Heart right ventricle (tissue), 16 donors: ENCODE measurements at regions of chr4 and their contacts with region 1.

Region 1: GRCh38 chr4:100754751-100755150 is 236.9 kb upstream of the EMCN start:
- DNase-seq: no peak
- ATAC-seq: no peak
- H3K4me3 ChIP-seq: no peak overlapping the region
- H3K27ac ChIP-seq: no peak overlapping the region
- H3K4me1 ChIP-seq: no peaks in the 10 kb centered on the region
- H3K27me3 ChIP-seq: no peaks in the 10 kb centered on the region
- CTCF ChIP-seq: no peak

Region 2: GRCh38 chr4:100086592-100087435 is 667.9 kb before region 1 on chr4:
- intact Hi-C with region 1: loop called in 2 of 10 experiments (anchors 5 to 10 kb)
- DNase-seq: no peak
- ATAC-seq: peak in 5 of 8 donors; percentile 17 to 66 (median 41)
- H3K4me3 ChIP-seq: no peak overlapping the region
- H3K27ac ChIP-seq: peak overlapping the region in 2 of 10 donors; percentile 12 to 21
- H3K4me1 ChIP-seq: peaks cover 0 to 8% (median 0%) of the 10 kb centered on the region in 9 donors
- H3K27me3 ChIP-seq: no peaks in the 10 kb centered on the region
- CTCF ChIP-seq: no peak

Region 3: GRCh38 chr4:100869276-100869675 is 114.5 kb after region 1 on chr4:
- intact Hi-C with region 1: no loop called
- DNase-seq: no peak
- ATAC-seq: no peak
- H3K4me3 ChIP-seq: no peak overlapping the region
- H3K27ac ChIP-seq: no peak overlapping the region
- H3K4me1 ChIP-seq: no peaks in the 10 kb centered on the region
- H3K27me3 ChIP-seq: no peaks in the 10 kb centered on the region
- CTCF ChIP-seq: no peak